Pancreas (tissue), 10 donors: ENCODE measurements at regions of chr17 and their contacts with region 1.

Region 1: DNA sequence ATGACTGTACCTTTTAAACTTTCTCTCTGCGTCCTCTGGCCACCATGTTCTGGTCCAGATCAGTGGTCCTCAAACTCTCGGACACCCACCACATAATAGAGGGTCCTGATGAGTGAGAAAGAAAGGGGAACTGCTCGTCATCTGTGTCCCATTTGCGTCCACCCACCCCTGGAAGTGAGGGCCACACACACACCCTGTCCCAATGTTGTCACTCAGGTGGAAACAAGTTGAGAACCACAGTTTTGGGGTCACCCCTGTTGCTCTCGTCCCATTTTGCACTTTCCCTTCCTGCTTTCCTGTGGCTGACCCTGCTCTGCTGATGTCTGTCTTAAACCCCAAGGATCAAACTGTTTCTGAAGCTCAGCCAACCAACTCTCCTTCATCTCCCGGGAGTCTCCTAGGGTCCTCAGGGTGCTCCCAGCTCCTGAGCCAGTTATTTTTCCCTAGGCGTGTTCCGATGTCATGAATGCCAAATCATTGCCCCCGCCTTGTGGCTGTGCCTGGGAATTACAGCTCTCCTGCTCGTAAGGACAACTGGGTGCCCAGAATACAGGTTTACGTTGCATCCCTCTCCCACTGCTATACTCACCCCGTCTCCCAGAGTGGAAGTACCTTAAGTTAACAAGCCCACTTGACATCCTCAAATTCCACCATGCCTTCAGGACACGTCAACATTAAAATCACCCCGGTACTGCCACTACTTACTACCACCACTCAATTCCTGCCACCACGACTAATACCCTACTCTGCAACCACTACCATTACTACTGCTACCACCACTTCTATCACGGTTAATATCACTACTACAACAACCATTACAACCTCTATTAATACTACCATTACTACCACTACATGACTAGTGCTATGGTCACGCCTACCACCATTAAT is 26.0 kb upstream of the HNF1B start:
- DNase-seq: peak; percentile 66 to 89 (median 82)
- ATAC-seq: peak; percentile 85 to 96 (median 92)
- H3K4me3 ChIP-seq: no peak overlapping the region
- H3K27ac ChIP-seq: no peak overlapping the region
- H3K4me1 ChIP-seq: no peaks in the 10 kb centered on the region
- H3K27me3 ChIP-seq: no peaks in the 10 kb centered on the region
- CTCF ChIP-seq: peak; percentile 55 to 78 (median 71)

Region 2: DNA sequence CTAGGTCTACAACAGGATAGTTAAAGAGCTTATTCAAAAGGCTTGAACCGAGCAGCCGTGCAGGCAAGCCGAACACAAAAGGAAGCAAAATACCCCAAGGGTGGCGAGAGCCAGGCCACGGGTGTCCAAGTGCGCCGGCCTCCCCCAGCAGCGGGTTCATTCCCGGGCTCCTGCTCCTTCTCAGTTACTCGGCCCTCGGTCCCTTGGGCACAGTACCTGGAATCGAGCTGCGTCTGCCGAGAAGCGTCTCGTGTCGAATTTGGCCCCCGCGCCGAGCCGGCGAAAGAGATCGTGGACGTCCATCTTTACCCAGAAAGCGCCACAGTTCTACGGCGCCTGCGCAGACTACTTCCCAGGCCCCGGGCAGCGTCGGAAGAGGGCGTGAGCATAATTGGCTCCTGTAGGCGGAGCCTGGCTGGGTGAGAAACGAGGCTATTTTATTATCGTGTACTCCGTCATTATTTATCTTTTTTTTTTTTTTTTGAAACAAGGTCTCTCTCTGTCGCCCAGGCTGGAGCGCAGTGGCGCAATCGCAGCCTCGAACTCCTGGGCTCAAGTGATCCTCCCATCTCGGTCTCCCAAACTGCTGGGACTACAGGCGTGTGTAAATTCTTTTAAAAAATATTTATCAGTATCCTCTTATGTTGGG is 127.6 kb before region 1 on chr17 and contains the start of gene DDX52:
- intact Hi-C with region 1: loop called in 1 of 3 experiments (anchors 10 kb)
- DNase-seq: peak; percentile 93 to 98 (median 94)
- ATAC-seq: peak; percentile 96 to 99 (median 98)
- H3K4me3 ChIP-seq: peak within 1 kb of the TSS; percentile 62 to 90 (median 70)
- H3K27ac ChIP-seq: peak within 1 kb of the TSS; percentile 59 to 83 (median 70)
- H3K4me1 ChIP-seq: peaks cover 4 to 22% (median 17%) of the 10 kb centered on the region in 3 donors
- H3K27me3 ChIP-seq: no peaks in the 10 kb centered on the region
- CTCF ChIP-seq: no peak
- total RNA-seq, gene DDX52: 9.5 to 21.4 (median 11.1) TPM

Region 3: GRCh38 chr17:37701496-37701898 is 69.4 kb before region 1 on chr17:
- intact Hi-C with region 1: loop called in 2 of 3 experiments (anchors 5 to 10 kb)
- DNase-seq: peak in 5 of 6 donors; percentile 43 to 74 (median 57)
- ATAC-seq: peak; percentile 66 to 84 (median 82)
- H3K4me3 ChIP-seq: no peak overlapping the region
- H3K27ac ChIP-seq: peak overlapping the region in 1 of 4 donors; percentile 25
- H3K4me1 ChIP-seq: peaks cover 0 to 8% (median 6%) of the 10 kb centered on the region in 3 donors
- H3K27me3 ChIP-seq: no peaks in the 10 kb centered on the region
- CTCF ChIP-seq: peak; percentile 48 to 75 (median 64)

Region 4: GRCh38 chr17:37824534-37825485 is 53.9 kb after region 1 on chr17:
- intact Hi-C with region 1: no loop called
- DNase-seq: no peak
- ATAC-seq: peak in 2 of 4 donors; percentile 31 to 71
- H3K4me3 ChIP-seq: no peak overlapping the region
- H3K27ac ChIP-seq: no peak overlapping the region
- H3K4me1 ChIP-seq: no peaks in the 10 kb centered on the region
- H3K27me3 ChIP-seq: no peaks in the 10 kb centered on the region
- CTCF ChIP-seq: no peak